ENCODE measurements at regions of chr12 and their contacts with region 1.

Region 1: DNA sequence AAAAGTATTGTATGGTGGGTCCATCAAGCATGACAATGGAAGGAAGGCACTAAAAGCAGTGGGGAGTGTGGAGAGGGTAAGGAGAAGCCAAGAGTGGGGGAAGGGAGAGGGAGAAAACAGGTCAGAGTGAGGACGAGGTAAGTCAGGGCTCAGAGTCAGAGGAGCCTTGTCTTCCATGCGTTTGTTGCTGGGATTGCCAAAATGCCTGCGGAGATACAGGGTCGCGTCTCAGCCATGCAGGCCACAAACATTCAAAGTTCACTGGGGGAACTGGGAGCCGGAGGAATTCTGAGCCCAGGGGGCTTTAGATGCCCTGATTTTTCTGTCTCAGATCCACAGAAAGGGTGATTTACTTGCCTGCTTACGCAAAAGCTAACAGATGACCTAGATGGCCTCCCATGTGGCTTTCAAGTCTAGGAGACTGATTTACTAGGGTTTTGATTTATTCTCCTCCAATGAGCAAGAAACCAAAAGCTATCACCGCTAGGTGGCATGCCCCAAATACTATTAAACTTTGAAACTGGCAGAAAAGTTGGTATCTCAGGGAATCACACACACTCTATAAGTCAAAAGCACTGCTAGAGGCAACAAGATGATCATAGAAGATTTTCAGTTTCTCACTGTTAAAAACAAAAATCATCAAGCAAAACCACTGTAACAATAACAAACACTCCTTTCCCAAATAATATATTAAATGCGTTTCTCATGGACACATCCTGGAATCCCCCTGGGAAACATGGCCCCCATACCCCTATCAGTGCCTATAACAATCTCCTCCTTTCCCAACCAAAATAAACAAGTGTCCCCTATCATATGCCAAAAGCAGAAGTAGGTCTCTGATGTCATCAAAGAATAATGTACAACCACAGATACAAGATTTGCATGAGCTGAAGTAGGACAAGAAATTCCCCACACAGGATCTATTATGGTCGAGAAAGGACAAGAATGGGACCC is 26.6 kb upstream of the MDM1 start:
- DNase-seq: peak; percentile 80
- ATAC-seq: peak; percentile 87
- H3K4me3 Mint-ChIP-seq: no peak overlapping the region
- H3K27ac Mint-ChIP-seq: no peak overlapping the region
- H3K4me1 Mint-ChIP-seq: peaks cover 28% of the 10 kb centered on the region
- H3K27me3 Mint-ChIP-seq: no peaks in the 10 kb centered on the region

Region 2: GRCh38 chr12:68240597-68241374 is 118.0 kb before region 1 on chr12:
- CTCF ChIA-PET with region 1: no interaction called
- DNase-seq: peak; percentile 82
- ATAC-seq: peak; percentile 99
- H3K4me3 Mint-ChIP-seq: peak overlapping the region; percentile 52
- H3K27ac Mint-ChIP-seq: peak overlapping the region; percentile 94
- H3K4me1 Mint-ChIP-seq: peaks cover 55% of the 10 kb centered on the region
- H3K27me3 Mint-ChIP-seq: peaks cover 7% of the 10 kb centered on the region

Region 3: DNA sequence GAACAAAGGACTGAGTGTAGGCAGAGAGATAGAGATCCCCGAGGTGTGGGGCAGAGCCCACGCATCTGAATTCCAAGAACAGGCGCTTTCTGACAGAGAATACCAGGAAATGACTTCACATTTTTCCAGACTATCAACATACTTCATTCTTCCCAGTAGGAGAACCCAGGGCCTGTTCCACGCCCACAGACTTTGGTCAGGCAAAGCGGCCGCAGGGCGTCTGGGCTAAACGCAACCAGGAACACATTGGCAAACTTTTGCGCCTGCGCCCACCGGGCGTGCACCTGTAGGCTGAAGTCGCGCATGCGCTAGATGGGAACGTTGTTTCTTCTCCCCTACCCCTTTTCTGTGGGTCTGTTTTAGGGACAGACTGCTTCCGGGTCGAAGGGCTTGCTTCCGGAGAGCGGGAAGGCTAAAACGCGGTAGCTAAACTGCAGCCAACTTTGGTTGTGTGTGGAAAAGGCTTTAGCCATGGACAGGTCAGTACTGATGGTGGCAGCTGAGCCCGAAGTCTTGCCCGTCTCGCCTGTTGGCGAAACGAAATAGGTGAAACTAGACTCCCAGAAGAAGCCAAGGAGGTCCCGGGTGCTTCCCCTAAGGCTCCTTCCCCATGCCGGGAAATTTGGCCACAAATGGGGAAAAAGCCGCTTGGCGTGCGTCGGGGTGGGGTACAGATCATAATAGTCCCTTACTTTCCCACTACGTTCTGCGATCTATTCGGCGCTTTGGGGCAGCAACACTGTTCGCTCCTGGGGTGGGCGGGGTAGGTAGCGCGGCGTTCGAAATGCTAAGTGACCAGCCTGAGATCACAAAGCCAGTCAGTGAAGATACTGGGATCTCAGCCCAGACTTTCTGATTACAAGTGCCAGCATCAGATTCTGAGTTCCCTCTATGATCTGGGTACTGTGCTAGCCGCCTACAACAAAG is 328.0 kb after region 1 on chr12 and contains the start of gene NUP107:
- CTCF ChIA-PET with region 1: interaction called, 10 read pairs
- DNase-seq: peak; percentile 98
- ATAC-seq: peak; percentile 97
- H3K4me3 Mint-ChIP-seq: peak within 1 kb of the TSS; percentile 97
- H3K27ac Mint-ChIP-seq: peak within 1 kb of the TSS; percentile 97
- H3K4me1 Mint-ChIP-seq: peaks cover 44% of the 10 kb centered on the region
- H3K27me3 Mint-ChIP-seq: no peaks in the 10 kb centered on the region
- total RNA-seq, gene NUP107: 127 to 141 TPM